SK-N-SH (cell line): ENCODE measurements at regions of chr11 and their contacts with region 1.

Region 1: DNA sequence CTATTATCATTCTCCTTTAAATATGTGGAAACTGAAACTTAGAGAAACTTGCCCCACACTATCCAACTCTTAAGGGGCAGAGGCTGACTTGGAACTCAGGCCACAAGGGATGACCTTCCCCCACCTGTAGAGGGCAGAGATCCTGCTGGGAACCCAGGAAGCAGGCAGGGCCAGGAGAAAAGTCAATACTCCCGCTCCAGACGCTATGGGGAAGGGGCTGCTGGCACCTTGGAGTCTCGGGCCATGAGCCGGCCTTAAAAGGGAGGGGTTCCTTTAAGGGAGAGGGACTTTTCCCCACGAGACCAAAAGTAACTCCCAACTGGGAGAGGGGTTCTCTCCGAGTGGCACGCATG is 620 bp upstream of the ANO5 start:
- DNase-seq: peak; percentile 52
- H3K4me3 ChIP-seq: peak overlapping the region; percentile 52 to 67
- H3K27ac ChIP-seq: peak overlapping the region in 1 of 2 experiments; percentile 73; a peak in 1 of 4 replicates
- H3K4me1 ChIP-seq: no peaks in the 10 kb centered on the region; a peak in 2 of 4 replicates
- H3K27me3 ChIP-seq: no peaks in the 10 kb centered on the region
- CTCF ChIP-seq: peak; percentile 36
- EP300 ChIP-seq: no peak
- RAD21 ChIP-seq: no peak

Region 2: DNA sequence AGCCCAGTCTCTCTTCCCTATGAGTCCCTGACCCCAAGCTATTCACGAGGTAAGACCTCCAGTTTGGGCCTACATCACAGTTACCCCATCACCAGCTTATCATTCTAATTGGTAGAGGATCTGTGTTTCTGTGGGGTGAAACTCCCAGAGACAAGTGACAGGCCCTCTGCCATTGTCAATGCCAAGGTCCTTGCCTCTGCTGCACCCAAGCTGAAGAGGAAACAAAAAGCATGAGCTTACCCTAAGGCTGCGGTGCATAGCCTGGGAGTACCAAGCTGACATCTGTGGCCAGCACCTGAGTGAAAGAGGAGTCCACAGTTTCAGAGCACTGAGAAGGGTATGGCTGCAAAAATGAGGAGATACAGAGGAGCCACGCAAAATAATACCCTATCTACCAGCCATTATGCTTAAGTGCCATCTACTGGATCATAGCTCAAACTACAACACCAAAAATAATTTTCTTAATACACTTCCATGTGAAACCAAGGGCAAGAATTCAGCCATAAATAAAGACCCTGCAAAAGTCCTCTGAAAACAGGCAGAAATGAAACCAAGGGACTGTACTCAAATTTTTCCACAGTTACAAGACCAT is 61.7 kb before region 1 on chr11:
- CTCF ChIA-PET with region 1: no interaction called
- POLR2A ChIA-PET with region 1: no interaction called
- DNase-seq: peak; percentile 23
- H3K4me3 ChIP-seq: no peak overlapping the region; a peak in 1 of 4 replicates
- H3K27ac ChIP-seq: peak overlapping the region in 1 of 2 experiments; percentile 67; a peak in 2 of 4 replicates
- H3K4me1 ChIP-seq: peaks cover 0 to 6% of the 10 kb centered on the region in 2 experiments; a peak in 1 of 4 replicates
- H3K27me3 ChIP-seq: no peaks in the 10 kb centered on the region
- CTCF ChIP-seq: peak; percentile 46
- EP300 ChIP-seq: no peak
- RAD21 ChIP-seq: peak; percentile 86

Region 3: GRCh38 chr11:22169833-22170232 is 22.4 kb before region 1 on chr11:
- CTCF ChIA-PET with region 1: interaction called, 11 read pairs
- POLR2A ChIA-PET with region 1: no interaction called
- DNase-seq: no peak
- H3K4me3 ChIP-seq: no peak overlapping the region
- H3K27ac ChIP-seq: no peak overlapping the region
- H3K4me1 ChIP-seq: no peaks in the 10 kb centered on the region; a peak in 1 of 4 replicates
- H3K27me3 ChIP-seq: no peaks in the 10 kb centered on the region
- CTCF ChIP-seq: peak; percentile 62
- EP300 ChIP-seq: no peak
- RAD21 ChIP-seq: peak; percentile 63

Region 4: GRCh38 chr11:22225190-22225589 is 32.9 kb after region 1 on chr11:
- CTCF ChIA-PET with region 1: no interaction called
- POLR2A ChIA-PET with region 1: no interaction called
- DNase-seq: no peak
- H3K4me3 ChIP-seq: no peak overlapping the region
- H3K27ac ChIP-seq: no peak overlapping the region
- H3K4me1 ChIP-seq: no peaks in the 10 kb centered on the region
- H3K27me3 ChIP-seq: no peaks in the 10 kb centered on the region
- CTCF ChIP-seq: no peak
- EP300 ChIP-seq: no peak
- RAD21 ChIP-seq: no peak